Activated CD4-positive, alpha-beta T cell treated with anti-CD3 and anti-CD28 coated beads, Interleukin-2, amount 10 ng/mL, durations not matched to agents 24 days and 14 days (primary cell): ENCODE measurements at regions of chr6 and their contacts with region 1.

Region 1: DNA sequence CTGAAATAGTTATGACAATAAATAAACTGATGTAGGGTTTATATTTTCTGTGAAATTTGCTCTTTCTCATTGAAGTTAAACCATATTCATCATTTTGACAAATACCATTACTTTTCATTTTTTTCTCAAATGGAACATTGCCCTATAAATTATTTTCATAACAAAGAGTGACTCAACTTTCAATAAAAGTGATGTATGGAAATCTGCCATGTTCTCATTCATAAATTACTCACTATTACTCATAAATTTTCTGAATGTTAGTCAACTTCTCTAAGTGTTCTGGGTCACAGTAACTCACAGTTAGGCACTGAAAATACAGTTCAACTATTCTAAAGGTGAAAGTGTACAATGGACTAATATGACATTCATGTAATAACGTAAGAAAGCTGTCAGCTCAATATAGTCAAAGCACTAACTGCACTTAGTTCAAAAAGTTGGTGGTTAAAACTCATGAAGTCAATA is 19.0 kb upstream of the STX11 start:
- DNase-seq: no peak
- H3K4me3 Mint-ChIP-seq: peak overlapping the region; percentile 57
- H3K27ac Mint-ChIP-seq: peak overlapping the region; percentile 91
- H3K4me1 Mint-ChIP-seq: peaks cover 19% of the 10 kb centered on the region
- H3K27me3 Mint-ChIP-seq: no peaks in the 10 kb centered on the region

Region 2: DNA sequence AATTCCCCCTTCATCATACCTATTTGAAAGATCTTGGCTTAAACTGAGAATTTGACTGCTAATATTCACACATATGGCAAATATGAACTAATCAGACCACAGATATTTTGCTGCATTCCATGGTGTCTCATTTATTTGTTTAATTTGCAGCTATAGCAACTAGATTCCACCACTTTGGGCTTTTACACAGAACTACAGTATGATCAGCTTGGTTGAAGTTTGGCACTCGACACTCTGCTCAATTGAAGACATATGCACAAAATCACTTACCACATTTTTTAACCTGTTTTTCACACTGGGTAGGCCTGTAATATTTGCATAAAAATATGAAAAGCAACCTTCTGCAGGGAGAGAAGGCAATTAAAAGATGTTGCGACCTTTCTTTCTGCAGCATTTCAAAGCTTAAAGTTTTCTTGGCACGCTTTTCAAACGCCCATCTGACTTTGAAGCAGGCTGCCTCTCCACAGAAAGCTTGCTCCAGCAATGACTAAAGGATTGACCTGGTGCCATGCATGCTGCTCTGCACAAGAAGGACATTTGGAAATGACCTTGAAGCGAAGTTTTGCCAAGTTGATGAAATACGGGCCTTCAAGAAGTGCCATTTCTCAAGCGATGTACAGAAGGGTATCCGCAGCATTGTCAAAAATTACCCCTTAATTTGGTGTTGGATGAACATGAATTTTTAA is 943.9 kb before region 1 on chr6:
- intact Hi-C with region 1: no loop called
- DNase-seq: no peak
- H3K4me3 Mint-ChIP-seq: no peak overlapping the region
- H3K27ac Mint-ChIP-seq: no peak overlapping the region
- H3K4me1 Mint-ChIP-seq: no peaks in the 10 kb centered on the region
- H3K27me3 Mint-ChIP-seq: no peaks in the 10 kb centered on the region

Region 3: DNA sequence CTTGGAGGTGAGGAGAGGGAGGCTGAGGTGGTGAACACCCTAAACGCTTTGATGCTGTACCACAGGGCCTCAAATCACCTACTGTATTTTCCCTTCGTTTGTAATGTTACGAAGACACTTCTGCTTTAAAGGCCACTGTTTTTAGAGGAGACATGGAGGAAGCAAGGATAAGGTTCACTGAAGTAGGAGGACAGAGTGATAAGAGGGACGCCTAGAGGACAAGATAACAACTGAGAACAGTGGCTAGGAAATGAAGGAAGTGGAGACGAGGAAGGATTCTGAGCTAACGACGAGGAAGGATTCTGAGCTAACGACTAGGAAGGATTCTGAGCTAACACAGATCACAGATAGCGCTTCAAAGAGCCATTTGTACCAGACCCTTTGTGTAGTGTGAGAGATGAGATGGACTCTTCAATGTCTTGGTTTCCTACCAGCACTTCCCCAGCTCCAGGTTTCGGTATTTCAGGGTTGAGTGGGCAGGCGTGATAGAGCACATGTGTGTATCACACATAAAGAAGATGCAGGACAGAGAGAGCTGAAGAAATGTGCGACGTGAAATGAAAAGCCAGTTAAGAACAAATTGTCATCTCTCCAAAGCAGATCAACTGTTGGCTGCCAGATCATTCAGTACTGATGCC is 43.4 kb before region 1 on chr6:
- intact Hi-C with region 1: no loop called
- DNase-seq: no peak
- H3K4me3 Mint-ChIP-seq: no peak overlapping the region
- H3K27ac Mint-ChIP-seq: peak overlapping the region; percentile 34
- H3K4me1 Mint-ChIP-seq: peaks cover 4% of the 10 kb centered on the region
- H3K27me3 Mint-ChIP-seq: no peaks in the 10 kb centered on the region

Region 4: DNA sequence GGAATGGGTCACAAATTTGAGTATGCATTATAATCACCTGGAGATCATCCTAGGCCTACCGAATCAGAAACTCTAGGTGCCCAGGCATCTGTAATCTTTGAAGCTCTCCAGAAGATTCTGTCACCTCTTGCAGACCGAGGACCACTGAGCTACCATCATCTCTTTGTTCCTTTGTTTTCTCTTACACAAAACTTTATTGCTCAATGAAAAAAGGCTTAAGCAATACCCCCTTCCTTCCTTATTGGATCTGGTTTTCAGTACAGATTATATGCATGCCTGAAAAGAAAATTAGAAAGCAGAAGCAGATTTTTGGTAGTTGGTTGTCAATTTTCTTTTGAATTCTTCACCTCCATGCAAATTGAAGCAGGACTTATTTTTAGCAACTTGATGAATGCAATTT is 50.4 kb after region 1 on chr6:
- intact Hi-C with region 1: loop called (anchors 1 kb)
- DNase-seq: no peak
- H3K4me3 Mint-ChIP-seq: no peak overlapping the region
- H3K27ac Mint-ChIP-seq: no peak overlapping the region
- H3K4me1 Mint-ChIP-seq: peaks cover 43% of the 10 kb centered on the region
- H3K27me3 Mint-ChIP-seq: no peaks in the 10 kb centered on the region

Region 5: DNA sequence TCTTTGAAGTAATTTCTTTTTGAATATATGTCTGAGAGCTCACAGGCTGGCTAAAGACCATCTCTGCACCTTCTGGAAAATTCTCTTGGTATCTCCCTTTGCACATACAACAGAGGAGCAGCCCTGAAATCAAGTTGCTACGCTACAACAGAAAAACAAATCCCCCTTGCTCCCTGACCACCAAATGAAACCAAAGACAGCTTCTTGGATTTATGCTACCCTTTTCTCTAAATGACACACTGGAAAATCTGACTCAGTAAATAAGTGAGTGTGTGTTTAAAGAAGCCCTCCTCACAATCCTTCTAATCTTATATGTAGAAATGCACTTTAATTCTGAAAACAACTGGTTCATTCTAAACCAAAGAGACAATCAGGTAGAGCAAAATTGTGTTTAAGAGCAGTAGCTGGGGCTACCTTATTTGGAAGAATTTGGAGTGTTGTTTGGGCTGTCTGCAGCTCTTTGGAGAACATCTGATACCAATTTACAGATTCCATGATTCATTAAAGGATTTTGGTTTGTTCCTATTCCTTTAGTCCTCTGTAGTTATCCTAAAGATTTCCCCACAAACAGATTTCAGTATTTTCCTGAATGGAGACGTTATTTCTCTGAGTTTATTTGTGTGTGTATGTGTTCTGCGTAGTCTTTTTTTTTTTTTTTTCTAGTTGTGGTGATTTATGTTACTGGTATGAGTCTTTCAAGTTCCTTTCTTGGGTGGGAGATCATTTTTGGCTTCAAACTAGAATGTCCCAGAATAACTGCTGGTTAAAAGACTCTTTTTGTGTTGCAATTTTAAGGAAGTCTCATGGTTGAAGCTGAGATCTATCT is 117.4 kb after region 1 on chr6:
- intact Hi-C with region 1: loop called (anchors 1 kb)
- DNase-seq: peak; percentile 60
- H3K4me3 Mint-ChIP-seq: no peak overlapping the region
- H3K27ac Mint-ChIP-seq: peak overlapping the region; percentile 58
- H3K4me1 Mint-ChIP-seq: peaks cover 14% of the 10 kb centered on the region
- H3K27me3 Mint-ChIP-seq: peaks cover 6% of the 10 kb centered on the region

Region 6: GRCh38 chr6:144343701-144344428 is 212.6 kb after region 1 on chr6:
- intact Hi-C with region 1: loop called (anchors 1 kb)
- DNase-seq: peak; percentile 84
- H3K4me3 Mint-ChIP-seq: peak overlapping the region; percentile 89
- H3K27ac Mint-ChIP-seq: peak overlapping the region; percentile 96
- H3K4me1 Mint-ChIP-seq: peaks cover 59% of the 10 kb centered on the region
- H3K27me3 Mint-ChIP-seq: no peaks in the 10 kb centered on the region